ENCODE measurements at regions of chr11 and their contacts with region 1.

Region 1: DNA sequence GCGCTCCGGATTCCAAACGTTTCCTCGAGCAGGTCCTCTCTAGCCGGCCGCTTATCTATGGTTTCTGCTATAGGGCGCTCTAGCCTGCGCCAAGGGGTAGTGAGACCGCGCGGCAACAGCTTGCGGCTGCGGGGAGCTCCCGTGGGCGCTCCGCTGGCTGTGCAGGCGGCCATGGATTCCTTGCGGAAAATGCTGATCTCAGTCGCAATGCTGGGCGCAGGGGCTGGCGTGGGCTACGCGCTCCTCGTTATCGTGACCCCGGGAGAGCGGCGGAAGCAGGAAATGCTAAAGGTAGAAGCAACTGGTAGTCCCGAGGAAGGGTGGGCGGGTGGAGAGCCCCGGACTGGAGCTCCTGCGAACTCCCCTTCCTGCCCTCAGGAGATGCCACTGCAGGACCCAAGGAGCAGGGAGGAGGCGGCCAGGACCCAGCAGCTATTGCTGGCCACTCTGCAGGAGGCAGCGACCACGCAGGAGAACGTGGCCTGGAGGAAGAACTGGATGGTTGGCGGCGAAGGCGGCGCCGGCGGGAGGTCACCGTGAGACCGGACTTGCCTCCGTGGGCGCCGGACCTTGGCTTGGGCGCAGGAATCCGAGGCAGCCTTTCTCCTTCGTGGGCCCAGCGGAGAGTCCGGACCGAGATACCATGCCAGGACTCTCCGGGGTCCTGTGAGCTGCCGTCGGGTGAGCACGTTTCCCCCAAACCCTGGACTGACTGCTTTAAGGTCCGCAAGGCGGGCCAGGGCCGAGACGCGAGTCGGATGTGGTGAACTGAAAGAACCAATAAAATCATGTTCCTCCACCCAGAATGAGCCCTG is at the starts of genes LBHD1 and UQCC3:
- DNase-seq: peak; percentile 67
- H3K4me3 Mint-ChIP-seq: peak within 1 kb of the TSS; percentile 97
- H3K27ac Mint-ChIP-seq: peak within 1 kb of the TSS; percentile 96
- H3K4me1 Mint-ChIP-seq: peaks cover 31% of the 10 kb centered on the region
- H3K27me3 Mint-ChIP-seq: no peaks in the 10 kb centered on the region
- total RNA-seq, gene LBHD1: 21.4 and 21.7 TPM in 2 replicates
- total RNA-seq, gene UQCC3: 8.0 and 9.5 TPM in 2 replicates

Region 2: GRCh38 chr11:62444236-62444833 is 227.4 kb before region 1 on chr11:
- intact Hi-C with region 1: no loop called
- DNase-seq: peak; percentile 20
- H3K4me3 Mint-ChIP-seq: peak overlapping the region; percentile 69
- H3K27ac Mint-ChIP-seq: peak overlapping the region; percentile 29
- H3K4me1 Mint-ChIP-seq: peaks cover 12% of the 10 kb centered on the region
- H3K27me3 Mint-ChIP-seq: peaks cover 16% of the 10 kb centered on the region

Region 3: GRCh38 chr11:62601394-62602140 is 70.2 kb before region 1 on chr11 and contains the start of gene MTA2:
- intact Hi-C with region 1: loop called (anchors 1 kb)
- DNase-seq: peak; percentile 100
- H3K4me3 Mint-ChIP-seq: peak within 1 kb of the TSS; percentile 91
- H3K27ac Mint-ChIP-seq: peak within 1 kb of the TSS; percentile 95
- H3K4me1 Mint-ChIP-seq: peaks cover 41% of the 10 kb centered on the region
- H3K27me3 Mint-ChIP-seq: no peaks in the 10 kb centered on the region
- total RNA-seq, gene MTA2: 201 and 215 TPM in 2 replicates

Region 4: DNA sequence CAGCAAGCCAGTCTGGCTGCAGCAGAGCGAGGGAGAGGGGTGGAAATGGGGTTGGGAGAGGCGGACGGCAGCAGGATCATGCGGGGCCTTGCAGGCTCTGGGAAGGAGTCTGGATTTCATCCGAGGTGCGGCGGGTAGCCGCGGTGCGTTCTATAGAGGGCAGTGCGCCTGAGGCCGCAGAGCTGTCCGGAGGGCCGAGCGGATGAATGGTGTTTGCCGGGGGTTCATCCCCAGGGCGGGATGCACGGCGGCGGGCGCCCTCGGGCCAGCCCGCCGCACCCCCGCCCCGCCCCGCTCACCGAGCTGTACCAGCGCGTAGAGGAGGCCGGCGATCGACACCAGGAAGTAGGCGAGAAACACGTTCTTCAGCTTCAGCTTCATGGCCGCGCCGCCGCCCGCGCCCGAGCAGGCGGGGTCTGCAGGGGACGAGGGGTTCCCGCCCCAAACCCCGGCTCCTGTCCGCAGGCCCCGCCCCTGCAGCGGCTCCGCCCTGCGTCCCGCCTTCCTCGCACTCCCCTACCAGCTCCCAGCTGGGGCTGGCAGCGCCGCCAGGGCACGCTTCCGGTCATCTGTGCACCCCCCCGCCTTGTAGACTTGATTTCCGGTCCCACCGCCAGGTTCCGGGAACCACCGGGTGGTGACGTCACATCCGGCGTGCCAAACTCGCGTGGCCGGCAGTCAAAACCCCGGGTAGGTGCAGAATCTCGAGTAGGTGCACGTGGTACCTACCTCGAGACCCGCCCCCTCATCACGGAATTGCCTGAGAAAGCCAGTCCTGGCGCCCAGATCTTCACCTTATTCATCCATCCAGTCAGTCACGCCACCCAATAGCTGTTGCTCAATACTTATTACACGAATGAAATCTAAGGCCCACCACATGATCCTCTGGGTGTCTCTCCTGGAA is 50.0 kb before region 1 on chr11 and contains the start of gene B3GAT3:
- intact Hi-C with region 1: no loop called
- DNase-seq: peak; percentile 94
- H3K4me3 Mint-ChIP-seq: peak within 1 kb of the TSS; percentile 93
- H3K27ac Mint-ChIP-seq: peak within 1 kb of the TSS; percentile 97
- H3K4me1 Mint-ChIP-seq: peaks cover 16% of the 10 kb centered on the region
- H3K27me3 Mint-ChIP-seq: no peaks in the 10 kb centered on the region
- total RNA-seq, gene B3GAT3: 70.0 and 81.4 TPM in 2 replicates

Region 5: DNA sequence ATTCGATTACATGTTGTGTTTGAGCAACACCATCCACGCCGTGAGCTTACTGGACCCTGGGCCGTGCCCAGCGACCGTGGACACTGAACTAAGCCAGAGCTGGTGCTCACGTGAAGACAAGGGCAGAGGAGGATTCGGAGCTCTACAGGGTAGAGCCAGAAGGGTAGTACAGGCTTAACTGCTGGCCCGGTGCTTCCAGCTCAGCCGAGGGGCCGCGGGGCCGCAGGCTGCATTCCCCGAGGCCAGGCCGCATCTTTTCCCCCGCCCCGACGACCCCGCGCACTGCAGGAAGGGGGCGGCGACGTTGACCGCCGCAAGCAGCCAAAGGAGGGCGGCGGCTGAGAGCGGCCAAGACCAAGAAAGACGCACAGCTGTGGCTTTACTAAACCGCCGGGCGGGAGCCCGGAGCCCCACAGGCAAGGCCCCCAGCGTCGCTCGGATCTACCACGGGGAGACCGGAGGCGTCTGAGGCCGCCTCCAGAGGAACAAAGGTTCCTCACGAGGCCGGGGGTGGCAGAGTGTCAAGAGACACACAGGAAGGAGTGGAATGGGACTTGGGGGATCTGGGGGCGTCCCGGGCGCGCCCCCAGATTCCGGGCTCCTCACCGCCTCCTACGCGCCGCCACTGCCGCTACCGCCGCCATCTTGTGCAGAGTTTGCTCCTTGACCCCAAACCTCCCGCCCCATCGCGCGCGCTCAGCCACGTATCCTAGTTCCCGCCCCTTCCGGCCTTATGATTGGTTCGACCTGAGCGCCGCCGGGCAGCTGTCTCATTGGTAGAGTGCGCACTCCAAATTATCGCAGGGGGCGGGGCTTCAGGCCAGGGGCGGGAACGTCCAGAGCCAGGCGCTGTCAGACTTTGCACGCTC is 25.6 kb before region 1 on chr11 and contains the start of gene GANAB:
- intact Hi-C with region 1: loop called (anchors 1 kb)
- DNase-seq: peak; percentile 98
- H3K4me3 Mint-ChIP-seq: peak within 1 kb of the TSS; percentile 98
- H3K27ac Mint-ChIP-seq: peak within 1 kb of the TSS; percentile 97
- H3K4me1 Mint-ChIP-seq: peaks cover 21% of the 10 kb centered on the region
- H3K27me3 Mint-ChIP-seq: no peaks in the 10 kb centered on the region
- total RNA-seq, gene GANAB: 274 and 279 TPM in 2 replicates

Region 6: DNA sequence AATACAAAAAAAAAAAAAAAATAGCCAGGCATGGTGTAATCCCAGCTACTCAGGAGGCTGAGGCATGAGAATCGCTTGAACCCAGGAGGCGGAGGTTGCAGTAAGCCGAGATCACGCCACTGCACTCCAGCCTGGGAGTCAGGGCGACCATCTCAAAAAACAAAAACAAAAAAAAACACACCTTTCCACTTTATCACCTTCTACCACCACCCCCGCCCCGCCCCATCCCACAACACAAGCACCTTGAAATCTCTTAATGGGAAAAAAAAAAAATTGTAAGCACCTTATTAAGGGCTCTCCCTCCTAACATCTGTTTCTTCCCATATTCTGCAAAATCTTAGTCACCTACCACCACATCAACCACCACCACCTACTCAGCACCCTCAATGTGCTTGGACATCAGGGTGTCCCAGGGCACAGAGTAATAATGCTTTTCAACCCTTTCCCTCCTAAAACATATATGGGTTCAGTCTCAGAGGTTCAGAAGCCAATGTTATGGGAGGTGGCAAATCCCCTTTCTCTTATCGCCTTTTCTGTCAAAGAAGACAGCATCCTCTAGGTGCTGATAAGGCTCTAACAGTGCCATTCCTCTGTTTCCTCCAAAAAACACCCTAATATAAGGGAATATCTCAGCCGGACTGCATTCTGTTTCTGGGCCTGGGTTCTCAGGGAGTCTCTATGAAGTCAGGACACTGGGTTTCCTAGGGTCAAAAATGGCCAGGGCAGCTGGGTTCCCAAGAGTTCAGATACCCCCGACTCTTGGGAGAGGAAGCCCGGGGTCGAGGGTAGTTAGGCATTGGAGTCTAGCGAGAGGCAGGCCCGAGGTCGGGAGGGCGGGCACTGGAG is 19.4 kb before region 1 on chr11:
- intact Hi-C with region 1: loop called (anchors 1 kb)
- DNase-seq: no peak
- H3K4me3 Mint-ChIP-seq: peak overlapping the region; percentile 98
- H3K27ac Mint-ChIP-seq: peak overlapping the region; percentile 92
- H3K4me1 Mint-ChIP-seq: peaks cover 10% of the 10 kb centered on the region
- H3K27me3 Mint-ChIP-seq: no peaks in the 10 kb centered on the region

Region 7: DNA sequence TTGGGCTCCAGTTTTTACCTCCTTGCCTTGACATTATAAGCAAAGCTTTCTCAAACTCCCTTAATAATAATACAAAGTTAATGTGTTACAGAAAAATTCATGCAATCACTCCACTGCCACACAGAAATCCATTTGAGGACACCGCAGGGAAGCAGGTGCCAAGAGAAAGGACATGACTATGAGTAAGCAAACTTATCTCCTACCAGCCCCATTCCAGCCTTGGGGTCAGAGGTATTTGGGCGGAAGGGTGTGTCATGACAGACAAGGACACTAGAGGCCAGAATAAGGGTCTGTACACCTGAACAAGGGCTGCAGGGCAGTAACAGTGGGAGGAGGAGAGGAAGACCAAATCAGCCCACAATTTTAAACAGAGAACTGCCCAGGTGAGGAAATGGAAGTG is 41.6 kb after region 1 on chr11:
- intact Hi-C with region 1: loop called (anchors 2 kb)
- DNase-seq: no peak
- H3K4me3 Mint-ChIP-seq: peak overlapping the region; percentile 24
- H3K27ac Mint-ChIP-seq: peak overlapping the region; percentile 87
- H3K4me1 Mint-ChIP-seq: peaks cover 57% of the 10 kb centered on the region
- H3K27me3 Mint-ChIP-seq: no peaks in the 10 kb centered on the region

Region 8: GRCh38 chr11:62805076-62805892 is 133.5 kb after region 1 on chr11 and contains the start of gene NXF1:
- intact Hi-C with region 1: no loop called
- DNase-seq: peak; percentile 95
- H3K4me3 Mint-ChIP-seq: peak within 1 kb of the TSS; percentile 98
- H3K27ac Mint-ChIP-seq: peak within 1 kb of the TSS; percentile 94
- H3K4me1 Mint-ChIP-seq: peaks cover 30% of the 10 kb centered on the region
- H3K27me3 Mint-ChIP-seq: no peaks in the 10 kb centered on the region
- total RNA-seq, gene NXF1: 134 and 139 TPM in 2 replicates

Region 9: GRCh38 chr11:62855571-62856332 is 184.0 kb after region 1 on chr11:
- intact Hi-C with region 1: loop called (anchors 5 kb)
- DNase-seq: peak; percentile 98
- H3K4me3 Mint-ChIP-seq: peak overlapping the region; percentile 96
- H3K27ac Mint-ChIP-seq: peak overlapping the region; percentile 96
- H3K4me1 Mint-ChIP-seq: peaks cover 45% of the 10 kb centered on the region
- H3K27me3 Mint-ChIP-seq: no peaks in the 10 kb centered on the region